ENCODE measurements at regions of chr12 and their contacts with region 1.

Region 1: GRCh38 chr12:68223083-68223747 is 2.4 kb downstream of the IL26 start:
- DNase-seq: peak; percentile 82 to 85 (median 83)
- H3K4me3 ChIP-seq: peak overlapping the region in 1 of 7 experiments; percentile 63
- H3K27ac ChIP-seq: no peak overlapping the region
- H3K4me1 ChIP-seq: peaks cover 0 to 2% (median 0%) of the 10 kb centered on the region in 4 experiments
- H3K27me3 ChIP-seq: peaks cover 0 to 2% (median 0%) of the 10 kb centered on the region in 5 experiments

Region 2: DNA sequence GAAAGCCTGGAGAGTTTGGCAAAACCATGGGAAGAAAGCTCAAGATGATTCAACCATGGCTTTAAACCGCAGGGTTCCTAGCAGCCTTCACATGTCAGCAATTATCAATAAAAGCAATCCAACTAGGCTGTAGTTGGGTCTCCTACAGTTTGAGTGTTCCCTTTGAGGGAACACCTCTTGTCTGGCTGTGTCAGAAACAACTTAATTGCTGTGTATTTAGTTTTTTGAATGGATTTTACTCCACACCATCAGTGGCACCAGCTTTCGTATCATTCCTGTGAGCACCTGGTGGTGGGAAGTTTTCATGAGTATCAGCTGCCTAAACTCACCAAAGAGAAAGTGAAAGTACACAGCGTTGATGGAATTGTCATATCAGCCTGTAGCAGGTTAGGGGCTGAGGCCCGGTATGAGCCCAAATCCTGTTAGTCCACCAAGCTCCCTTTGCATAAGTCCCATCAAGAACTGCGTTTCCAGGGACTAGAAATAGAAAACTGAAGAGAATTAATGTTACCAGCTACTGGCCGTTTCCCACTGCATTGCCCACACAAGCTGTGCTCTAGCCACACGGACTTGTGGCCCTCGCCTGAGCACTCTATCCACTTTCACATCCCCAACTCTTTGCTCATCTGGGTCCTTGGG is 13.3 kb after region 1 on chr12:
- CTCF ChIA-PET with region 1: interaction called, 11 read pairs
- POLR2A ChIA-PET with region 1: no interaction called
- DNase-seq: peak; percentile 59 to 87 (median 80)
- H3K4me3 ChIP-seq: peak overlapping the region in 6 of 7 experiments; percentile 7 to 83 (median 56)
- H3K27ac ChIP-seq: peak overlapping the region in 1 of 2 experiments; percentile 37
- H3K4me1 ChIP-seq: peaks cover 0 to 21% (median 8%) of the 10 kb centered on the region in 4 experiments
- H3K27me3 ChIP-seq: no peaks in the 10 kb centered on the region

Region 3: GRCh38 chr12:68310370-68310769 is 87.2 kb after region 1 on chr12:
- CTCF ChIA-PET with region 1: interaction called, 30 read pairs
- POLR2A ChIA-PET with region 1: no interaction called
- DNase-seq: no peak
- H3K4me3 ChIP-seq: no peak overlapping the region
- H3K27ac ChIP-seq: no peak overlapping the region
- H3K4me1 ChIP-seq: no peaks in the 10 kb centered on the region
- H3K27me3 ChIP-seq: no peaks in the 10 kb centered on the region

Region 4: GRCh38 chr12:68317047-68317667 is 93.9 kb after region 1 on chr12:
- CTCF ChIA-PET with region 1: interaction called, 30 read pairs
- POLR2A ChIA-PET with region 1: no interaction called
- DNase-seq: peak; percentile 63 to 84 (median 80)
- H3K4me3 ChIP-seq: no peak overlapping the region
- H3K27ac ChIP-seq: no peak overlapping the region
- H3K4me1 ChIP-seq: no peaks in the 10 kb centered on the region
- H3K27me3 ChIP-seq: no peaks in the 10 kb centered on the region

Measured in common myeloid progenitor, CD34-positive (primary cell).